ENCODE measurements at regions of chr10 and their contacts with region 1.

Region 1: GRCh38 chr10:69914398-69915214 is 112.9 kb downstream of the COL13A1 start:
- DNase-seq: peak; percentile 71 to 87
- H3K4me3 ChIP-seq: no peak overlapping the region
- H3K27ac ChIP-seq: no peak overlapping the region
- H3K4me1 ChIP-seq: peaks cover 0 to 55% (median 47%) of the 10 kb centered on the region in 4 donors
- H3K27me3 ChIP-seq: no peaks in the 10 kb centered on the region
- CTCF ChIP-seq: peak; percentile 96 to 97

Region 2: GRCh38 chr10:69786791-69787190 is 127.8 kb before region 1 on chr10:
- intact Hi-C with region 1: loop called (anchors 5 kb)
- DNase-seq: no peak
- H3K4me3 ChIP-seq: no peak overlapping the region
- H3K27ac ChIP-seq: peak overlapping the region; percentile 29 to 76
- H3K4me1 ChIP-seq: peaks cover 0 to 45% (median 13%) of the 10 kb centered on the region in 4 donors
- H3K27me3 ChIP-seq: no peaks in the 10 kb centered on the region
- CTCF ChIP-seq: peak; percentile 18 to 41

Region 3: DNA sequence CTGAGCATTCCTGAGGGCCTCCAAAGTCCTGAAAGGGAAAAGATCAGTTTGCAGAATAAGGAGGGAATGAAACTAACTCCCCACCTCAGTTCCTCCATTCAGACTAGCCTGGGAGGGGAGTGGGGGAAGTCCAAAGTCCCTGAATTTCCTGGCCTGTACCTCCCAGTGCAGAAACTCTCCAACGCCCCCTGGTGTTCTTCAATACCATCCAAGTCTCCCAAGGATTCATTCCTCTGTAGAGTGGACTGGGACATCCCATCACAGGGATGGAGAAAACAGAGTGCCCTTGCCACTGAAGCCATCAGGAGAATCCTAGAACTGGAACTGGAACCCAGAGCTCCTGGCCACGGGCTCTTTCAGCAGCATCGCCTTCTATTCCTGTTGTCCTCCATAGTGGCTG is 114.5 kb before region 1 on chr10:
- intact Hi-C with region 1: loop called (anchors 2 kb)
- DNase-seq: peak in 1 of 2 donors; percentile 74
- H3K4me3 ChIP-seq: no peak overlapping the region
- H3K27ac ChIP-seq: peak overlapping the region; percentile 25 to 79
- H3K4me1 ChIP-seq: peaks cover 0 to 34% (median 28%) of the 10 kb centered on the region in 4 donors
- H3K27me3 ChIP-seq: no peaks in the 10 kb centered on the region
- CTCF ChIP-seq: peak; percentile 62 to 67

Measured in tibial artery (tissue), 4 donors.